Activated CD4-positive, alpha-beta T cell treated with anti-CD3 and anti-CD28 coated beads for 36 hours (primary cell): ENCODE measurements at regions of chr3 and their contacts with region 1.

Region 1: GRCh38 chr3:114418724-114419543 is 125.1 kb downstream of the TIGIT start:
- DNase-seq: no peak
- ATAC-seq: peak; percentile 70
- H3K4me3 Mint-ChIP-seq: peak overlapping the region; percentile 29
- H3K27ac Mint-ChIP-seq: peak overlapping the region; percentile 79
- H3K4me1 Mint-ChIP-seq: peaks cover 35% of the 10 kb centered on the region
- H3K27me3 Mint-ChIP-seq: no peaks in the 10 kb centered on the region

Region 2: DNA sequence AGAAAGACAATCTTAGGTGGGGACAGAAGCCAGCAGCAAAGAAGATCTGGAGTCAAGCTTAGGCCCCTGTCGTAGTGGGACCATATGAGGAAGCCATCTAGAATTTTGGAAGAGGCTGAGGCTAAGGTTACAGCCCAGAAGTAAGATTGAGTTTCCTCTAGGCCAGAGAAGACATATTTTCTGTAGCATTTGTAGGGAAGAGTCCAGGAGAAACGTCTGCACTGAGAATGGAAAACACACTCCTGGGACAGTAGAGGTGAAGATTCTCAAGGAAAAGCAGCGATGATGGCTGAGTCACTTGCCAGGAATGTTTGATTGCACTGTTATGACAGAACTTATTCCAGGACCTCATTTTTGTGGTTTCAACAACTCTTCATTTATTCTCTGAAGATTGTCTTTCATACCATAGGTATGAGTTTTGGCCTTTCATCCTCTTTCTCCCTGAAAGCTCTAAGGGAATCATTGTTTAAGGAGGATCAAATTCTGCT is 1320.9 kb before region 1 on chr3:
- CTCF ChIA-PET with region 1: no interaction called
- POLR2A ChIA-PET with region 1: no interaction called
- intact Hi-C with region 1: no loop called
- DNase-seq: no peak
- ATAC-seq: no peak
- H3K4me3 Mint-ChIP-seq: no peak overlapping the region
- H3K27ac Mint-ChIP-seq: no peak overlapping the region
- H3K4me1 Mint-ChIP-seq: peaks cover 12% of the 10 kb centered on the region
- H3K27me3 Mint-ChIP-seq: no peaks in the 10 kb centered on the region

Region 3: DNA sequence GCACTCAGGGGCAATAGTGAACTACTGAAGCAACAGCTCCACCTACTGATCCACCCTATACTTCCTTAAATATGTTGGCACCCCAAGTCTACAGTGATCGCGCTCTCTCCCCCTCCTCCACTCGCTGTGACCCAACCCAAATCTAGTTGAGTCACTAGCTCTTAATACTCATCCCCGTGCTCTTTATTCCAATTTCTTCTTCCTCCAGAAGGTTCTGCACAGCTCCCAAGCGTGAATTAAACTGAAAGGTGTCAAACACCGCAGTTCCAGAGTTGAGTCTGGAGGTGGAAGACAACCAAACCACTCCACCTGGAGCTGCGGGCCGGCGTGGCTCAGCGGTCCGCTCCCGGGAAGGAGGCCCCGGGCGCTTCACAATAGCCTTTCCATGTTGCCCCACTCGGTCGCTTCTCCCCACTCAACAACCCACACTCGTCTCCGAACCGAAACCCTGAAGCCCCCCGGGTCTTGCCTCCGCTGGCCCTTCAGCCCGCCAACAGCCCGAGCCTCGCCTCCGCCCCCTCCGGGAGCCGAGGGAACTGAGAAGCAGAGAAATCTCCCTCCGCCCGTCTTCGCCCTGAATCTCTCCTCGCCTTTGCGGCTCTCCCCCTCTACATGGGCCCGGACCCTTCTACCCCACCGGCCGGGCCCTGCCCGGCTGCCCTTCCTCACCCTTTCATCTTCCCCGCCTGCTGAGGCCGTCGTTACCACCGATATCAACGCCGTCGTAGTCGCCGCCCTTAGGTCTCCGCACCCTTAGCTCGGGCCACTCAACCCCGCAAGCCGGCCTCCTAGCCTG is 673.5 kb before region 1 on chr3:
- CTCF ChIA-PET with region 1: no interaction called
- POLR2A ChIA-PET with region 1: no interaction called
- intact Hi-C with region 1: loop called in 1 of 2 experiments (anchors 1 kb)
- DNase-seq: peak; percentile 88
- ATAC-seq: peak; percentile 71
- H3K4me3 Mint-ChIP-seq: peak overlapping the region; percentile 93
- H3K27ac Mint-ChIP-seq: peak overlapping the region; percentile 100
- H3K4me1 Mint-ChIP-seq: peaks cover 66% of the 10 kb centered on the region
- H3K27me3 Mint-ChIP-seq: no peaks in the 10 kb centered on the region

Region 4: GRCh38 chr3:114213627-114214541 is 205.1 kb before region 1 on chr3:
- CTCF ChIA-PET with region 1: interaction called, 5 read pairs
- POLR2A ChIA-PET with region 1: interaction called, 9 read pairs
- intact Hi-C with region 1: loop called (anchors 1 kb)
- DNase-seq: peak; percentile 86
- ATAC-seq: peak; percentile 76
- H3K4me3 Mint-ChIP-seq: no peak overlapping the region
- H3K27ac Mint-ChIP-seq: no peak overlapping the region
- H3K4me1 Mint-ChIP-seq: peaks cover 17% of the 10 kb centered on the region
- H3K27me3 Mint-ChIP-seq: no peaks in the 10 kb centered on the region

Region 5: DNA sequence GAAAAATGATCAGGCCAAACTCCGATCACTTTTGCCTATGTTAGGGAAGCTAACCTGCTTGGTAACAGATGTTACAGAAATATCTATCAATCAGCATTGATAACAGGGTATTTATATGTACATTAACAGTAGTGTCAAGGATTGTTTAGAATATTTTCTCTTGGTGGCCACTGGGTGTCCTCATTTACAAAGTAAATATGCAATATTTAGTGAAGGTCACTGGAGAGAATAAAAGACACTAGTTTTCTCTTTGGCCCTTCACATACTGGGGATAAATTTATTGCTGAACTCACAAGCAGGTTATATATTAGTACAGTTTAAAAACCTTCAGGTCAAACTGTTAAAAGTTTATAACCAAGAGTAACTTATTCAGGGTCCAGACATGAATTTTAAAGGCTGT is 56.1 kb before region 1 on chr3:
- CTCF ChIA-PET with region 1: interaction called, 4 read pairs
- POLR2A ChIA-PET with region 1: no interaction called
- intact Hi-C with region 1: loop called in 1 of 2 experiments (anchors 2 kb)
- DNase-seq: no peak
- ATAC-seq: peak; percentile 49
- H3K4me3 Mint-ChIP-seq: no peak overlapping the region
- H3K27ac Mint-ChIP-seq: no peak overlapping the region
- H3K4me1 Mint-ChIP-seq: peaks cover 5% of the 10 kb centered on the region
- H3K27me3 Mint-ChIP-seq: no peaks in the 10 kb centered on the region

Region 6: DNA sequence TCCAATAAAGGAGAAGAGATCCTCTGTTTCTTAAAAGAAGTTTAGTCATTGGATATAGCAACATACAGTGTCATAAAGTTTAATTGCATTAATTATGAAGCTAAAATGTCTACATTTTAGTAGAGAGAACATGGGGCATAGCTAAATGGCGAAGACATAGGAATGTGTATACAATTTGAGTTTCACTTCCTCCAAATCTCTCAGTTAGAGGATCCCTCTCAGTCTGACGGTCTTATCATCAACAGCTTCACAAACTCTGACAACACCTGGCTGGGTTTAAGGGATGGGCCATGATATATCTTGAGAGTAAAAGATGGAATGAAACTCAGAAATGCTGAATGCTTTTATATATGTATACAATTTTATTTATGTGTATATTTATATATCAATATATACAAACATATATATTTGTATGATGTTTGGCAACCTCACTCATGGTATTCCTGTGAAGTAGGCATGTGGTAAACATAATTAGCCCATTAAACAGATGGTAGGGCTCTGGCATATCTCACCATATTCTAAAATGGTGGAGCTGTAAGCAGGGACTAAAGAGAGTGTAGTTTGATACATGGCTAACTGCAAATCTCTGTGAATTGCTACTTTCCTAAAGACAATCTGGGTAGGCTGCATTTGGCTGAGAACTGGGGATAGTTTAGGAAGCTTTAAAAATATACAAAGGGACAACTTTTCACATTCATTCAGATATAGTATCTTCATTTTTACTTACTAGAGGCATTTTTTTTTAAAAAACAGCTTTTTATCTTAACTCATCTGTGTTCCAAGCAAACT is 13.5 kb before region 1 on chr3:
- CTCF ChIA-PET with region 1: interaction called, 15 read pairs
- POLR2A ChIA-PET with region 1: no interaction called
- intact Hi-C with region 1: no loop called
- DNase-seq: no peak
- ATAC-seq: no peak
- H3K4me3 Mint-ChIP-seq: no peak overlapping the region
- H3K27ac Mint-ChIP-seq: no peak overlapping the region
- H3K4me1 Mint-ChIP-seq: no peaks in the 10 kb centered on the region
- H3K27me3 Mint-ChIP-seq: no peaks in the 10 kb centered on the region

Region 7: DNA sequence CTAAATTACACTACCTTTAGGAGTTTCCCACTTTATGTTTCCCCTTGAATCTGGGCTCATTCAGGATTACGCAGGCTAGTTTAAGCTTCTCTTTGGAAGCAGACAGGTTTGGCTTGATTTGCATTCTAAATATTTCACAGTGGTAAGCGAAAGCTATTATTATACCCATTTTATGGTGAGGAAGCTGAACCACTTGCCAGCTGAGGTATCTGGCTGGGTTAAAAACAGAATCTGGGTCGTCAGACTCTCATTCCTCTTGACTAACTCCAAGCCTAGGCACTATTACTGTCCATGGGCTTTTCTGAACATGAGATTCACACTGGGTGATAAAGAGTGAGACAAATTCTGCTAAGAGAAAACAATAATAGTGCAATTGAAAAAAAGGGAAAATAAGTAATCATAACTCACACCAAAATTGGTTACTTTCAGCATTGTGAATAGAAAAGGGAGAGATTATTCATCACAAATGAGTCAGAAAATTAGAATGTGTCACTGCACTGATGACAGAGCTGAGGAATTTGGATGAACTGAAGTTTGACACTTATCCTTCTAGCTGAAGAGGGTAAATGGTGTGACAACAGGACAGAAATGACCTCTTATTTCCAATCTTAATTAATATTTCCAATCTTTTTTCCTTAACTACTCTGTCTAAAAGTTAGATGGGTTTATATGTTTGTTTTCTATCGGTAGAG is 86.2 kb after region 1 on chr3:
- CTCF ChIA-PET with region 1: interaction called, 4 read pairs
- POLR2A ChIA-PET with region 1: no interaction called
- intact Hi-C with region 1: loop called in 1 of 2 experiments (anchors 1 kb)
- DNase-seq: no peak
- ATAC-seq: peak; percentile 94
- H3K4me3 Mint-ChIP-seq: no peak overlapping the region
- H3K27ac Mint-ChIP-seq: no peak overlapping the region
- H3K4me1 Mint-ChIP-seq: peaks cover 40% of the 10 kb centered on the region
- H3K27me3 Mint-ChIP-seq: peaks cover 19% of the 10 kb centered on the region

Region 8: GRCh38 chr3:115147329-115148141 is 728.6 kb after region 1 on chr3:
- CTCF ChIA-PET with region 1: no interaction called
- POLR2A ChIA-PET with region 1: no interaction called
- intact Hi-C with region 1: loop called in 1 of 2 experiments (anchors 10 kb)
- DNase-seq: peak; percentile 97
- ATAC-seq: peak; percentile 85
- H3K4me3 Mint-ChIP-seq: peak overlapping the region; percentile 97
- H3K27ac Mint-ChIP-seq: peak overlapping the region; percentile 98
- H3K4me1 Mint-ChIP-seq: peaks cover 21% of the 10 kb centered on the region
- H3K27me3 Mint-ChIP-seq: no peaks in the 10 kb centered on the region